ENCODE measurements at regions of chr17 and their contacts with region 1.

Region 1: DNA sequence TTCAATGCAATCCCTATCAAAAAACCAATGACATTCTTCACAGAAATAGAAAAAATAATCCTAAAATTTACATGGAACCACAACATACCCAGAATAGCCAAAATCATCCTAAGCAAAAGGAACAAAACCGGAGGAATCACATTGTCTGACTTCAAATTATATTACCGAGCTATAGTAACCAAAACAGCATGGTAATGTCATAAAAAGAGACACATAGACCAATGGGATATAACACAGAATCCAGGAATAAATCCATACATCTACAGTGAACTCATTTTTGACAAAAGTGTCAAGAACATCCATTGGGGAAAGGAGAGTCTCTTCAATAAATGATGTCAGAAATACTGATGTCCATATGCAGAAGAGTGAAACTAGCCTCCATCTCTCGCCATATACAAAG is 105.8 kb upstream of the CORO6 start:
- DNase-seq: no peak
- H3K4me3 ChIP-seq: no peak overlapping the region
- H3K27ac ChIP-seq: peak overlapping the region; percentile 98
- H3K4me1 ChIP-seq: peaks cover 50% of the 10 kb centered on the region
- H3K27me3 ChIP-seq: no peaks in the 10 kb centered on the region
- CTCF ChIP-seq: no peak

Region 2: GRCh38 chr17:29495011-29495410 is 233.5 kb before region 1 on chr17:
- CTCF ChIA-PET with region 1: no interaction called
- POLR2A ChIA-PET with region 1: no interaction called
- intact Hi-C with region 1: no loop called
- DNase-seq: no peak
- H3K4me3 ChIP-seq: no peak overlapping the region
- H3K27ac ChIP-seq: no peak overlapping the region
- H3K4me1 ChIP-seq: no peaks in the 10 kb centered on the region
- H3K27me3 ChIP-seq: no peaks in the 10 kb centered on the region
- CTCF ChIP-seq: no peak

Region 3: GRCh38 chr17:29742199-29742533 is 13.7 kb after region 1 on chr17:
- CTCF ChIA-PET with region 1: no interaction called
- POLR2A ChIA-PET with region 1: no interaction called
- intact Hi-C with region 1: loop called (anchors 2 kb)
- DNase-seq: no peak
- H3K4me3 ChIP-seq: no peak overlapping the region
- H3K27ac ChIP-seq: no peak overlapping the region
- H3K4me1 ChIP-seq: peaks cover 60% of the 10 kb centered on the region
- H3K27me3 ChIP-seq: no peaks in the 10 kb centered on the region
- CTCF ChIP-seq: no peak

Region 4: GRCh38 chr17:29753845-29754439 is 25.5 kb after region 1 on chr17:
- CTCF ChIA-PET with region 1: no interaction called
- POLR2A ChIA-PET with region 1: no interaction called
- intact Hi-C with region 1: no loop called
- DNase-seq: no peak
- H3K4me3 ChIP-seq: no peak overlapping the region
- H3K27ac ChIP-seq: no peak overlapping the region
- H3K4me1 ChIP-seq: peaks cover 1% of the 10 kb centered on the region
- H3K27me3 ChIP-seq: no peaks in the 10 kb centered on the region
- CTCF ChIP-seq: no peak

Region 5: DNA sequence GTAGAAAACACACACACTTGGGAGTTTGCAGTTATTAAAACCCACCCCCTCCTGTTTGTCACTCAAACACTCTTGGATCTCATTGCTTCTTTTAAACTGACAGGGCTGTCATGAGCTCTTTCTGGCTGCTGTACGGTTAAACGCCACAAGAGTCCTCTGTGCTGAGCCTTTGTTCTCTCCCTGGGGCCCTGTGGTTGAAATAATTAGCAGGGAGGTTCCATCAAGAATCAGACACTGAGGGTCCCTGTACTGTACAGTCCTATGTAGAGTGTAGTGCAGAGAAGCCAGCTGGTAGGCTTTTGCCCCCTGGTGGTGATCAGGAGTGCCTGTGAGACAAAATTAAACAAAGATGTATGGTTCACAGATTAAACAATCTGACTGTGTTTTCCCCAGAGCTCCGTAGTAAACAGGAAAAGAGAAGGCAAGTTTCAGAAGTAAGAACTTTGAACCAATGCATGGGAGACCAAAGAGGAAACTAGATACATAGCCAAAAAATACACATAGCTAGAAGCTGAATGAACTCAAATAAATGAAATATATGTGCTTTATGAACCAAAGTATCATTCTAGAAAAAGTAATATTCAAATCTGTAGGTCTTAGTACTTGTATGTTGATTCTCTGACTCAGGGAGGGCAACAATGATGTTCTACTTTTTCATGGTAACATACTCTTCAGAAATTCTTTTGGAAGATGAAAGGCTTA is 202.9 kb after region 1 on chr17:
- CTCF ChIA-PET with region 1: no interaction called
- POLR2A ChIA-PET with region 1: no interaction called
- intact Hi-C with region 1: no loop called
- DNase-seq: peak; percentile 99
- H3K4me3 ChIP-seq: peak overlapping the region; percentile 80
- H3K27ac ChIP-seq: peak overlapping the region; percentile 88
- H3K4me1 ChIP-seq: peaks cover 31% of the 10 kb centered on the region
- H3K27me3 ChIP-seq: no peaks in the 10 kb centered on the region
- CTCF ChIP-seq: peak; percentile 98

Region 6: DNA sequence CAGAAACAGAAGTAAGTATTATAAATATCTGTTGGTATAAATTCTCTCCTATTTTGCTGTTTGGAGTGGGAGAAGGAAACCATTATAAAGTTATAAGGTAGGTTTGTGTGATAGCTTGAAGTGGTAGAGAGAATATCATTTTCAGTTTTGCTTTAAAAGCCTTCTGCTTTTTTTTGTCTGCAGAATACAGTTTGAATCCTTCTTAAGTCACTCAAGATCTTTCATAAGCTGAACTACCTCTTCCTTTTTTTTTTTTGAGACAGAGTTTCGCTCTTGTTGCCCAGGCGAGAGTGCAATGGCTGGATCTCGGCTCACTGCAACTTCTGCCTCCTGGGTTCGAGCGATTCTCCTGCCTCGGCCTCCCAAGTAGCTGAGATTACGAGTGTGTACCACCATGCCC is 1112.3 kb after region 1 on chr17:
- CTCF ChIA-PET with region 1: no interaction called
- POLR2A ChIA-PET with region 1: no interaction called
- intact Hi-C with region 1: no loop called
- DNase-seq: no peak
- H3K4me3 ChIP-seq: no peak overlapping the region
- H3K27ac ChIP-seq: no peak overlapping the region
- H3K4me1 ChIP-seq: no peaks in the 10 kb centered on the region
- H3K27me3 ChIP-seq: no peaks in the 10 kb centered on the region
- CTCF ChIP-seq: no peak